Activated CD4-positive, alpha-beta T cell treated with anti-CD3 and anti-CD28 coated beads for 36 hours (primary cell): ENCODE measurements at regions of chr12 and their contacts with region 1.

Region 1: DNA sequence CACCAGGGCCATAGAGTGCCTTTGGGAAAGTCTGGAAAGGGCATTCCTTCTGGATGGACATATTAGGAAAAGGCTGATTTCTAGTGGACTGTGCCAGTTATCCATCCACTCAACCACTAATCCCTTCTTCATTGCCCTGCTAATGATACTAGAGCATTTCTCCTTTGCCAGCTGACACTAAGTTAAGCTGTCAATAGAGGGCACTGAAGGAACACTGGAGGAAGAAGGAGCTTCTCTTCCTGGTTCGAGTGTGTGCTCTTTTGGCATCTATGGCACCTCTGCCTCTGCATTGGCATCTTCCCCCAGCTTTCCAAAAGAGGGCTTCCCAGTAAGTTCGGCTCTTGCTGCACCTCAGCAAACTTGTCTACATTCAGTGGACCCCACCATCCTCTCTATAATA is 165.4 kb downstream of the DERA start:
- DNase-seq: no peak
- ATAC-seq: no peak
- H3K4me3 Mint-ChIP-seq: no peak overlapping the region
- H3K27ac Mint-ChIP-seq: no peak overlapping the region
- H3K4me1 Mint-ChIP-seq: no peaks in the 10 kb centered on the region
- H3K27me3 Mint-ChIP-seq: peaks cover 3% of the 10 kb centered on the region

Region 2: DNA sequence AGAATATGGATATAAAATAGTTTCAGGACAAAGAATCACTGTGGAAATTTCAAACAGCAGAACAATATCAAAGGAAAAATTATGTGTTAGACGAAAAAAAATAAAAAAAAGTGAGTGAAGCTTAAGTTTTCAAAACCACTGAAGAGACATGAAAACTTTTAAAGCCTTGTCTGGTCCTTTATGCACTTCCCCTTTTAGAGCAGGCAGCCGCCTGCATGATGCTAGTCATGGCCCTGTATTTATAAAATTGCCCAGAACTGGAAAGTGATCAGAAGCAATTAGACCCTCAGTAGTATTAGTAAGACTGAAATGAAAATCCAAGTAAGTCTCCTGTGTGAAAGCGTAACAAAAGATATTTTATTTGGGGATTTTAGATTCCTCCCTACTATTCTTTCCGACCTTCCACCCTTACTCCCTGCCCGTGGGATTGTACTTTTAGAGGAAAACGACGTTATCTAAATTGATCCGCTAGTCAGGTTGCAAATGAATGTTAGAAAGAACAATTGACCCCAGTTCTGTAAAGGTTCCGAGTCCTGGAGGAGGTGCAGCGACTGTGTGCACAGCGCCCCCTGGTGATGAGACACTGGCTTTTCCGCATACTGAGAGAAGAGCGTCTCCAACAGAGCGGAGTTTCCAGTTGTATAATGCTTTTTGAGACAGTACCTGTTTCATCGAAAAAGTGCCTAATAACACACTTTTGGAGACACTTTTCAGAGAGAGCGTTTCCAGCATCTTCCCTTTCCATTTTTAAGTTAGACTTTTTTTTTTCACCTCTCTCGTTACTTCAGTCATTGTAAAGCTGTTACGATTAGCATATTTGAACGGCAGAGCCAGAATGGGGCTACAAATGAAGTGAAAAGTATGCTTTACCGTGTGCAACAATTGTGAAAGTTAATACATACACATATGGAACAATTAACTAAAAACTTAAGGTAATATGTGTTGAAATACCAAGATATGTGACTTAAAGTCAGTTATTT is 283.2 kb after region 1 on chr12:
- CTCF ChIA-PET with region 1: no interaction called
- POLR2A ChIA-PET with region 1: no interaction called
- intact Hi-C with region 1: loop called in 1 of 2 experiments (anchors 2 kb)
- DNase-seq: peak; percentile 60
- ATAC-seq: no peak
- H3K4me3 Mint-ChIP-seq: no peak overlapping the region
- H3K27ac Mint-ChIP-seq: no peak overlapping the region
- H3K4me1 Mint-ChIP-seq: no peaks in the 10 kb centered on the region
- H3K27me3 Mint-ChIP-seq: no peaks in the 10 kb centered on the region

Region 3: DNA sequence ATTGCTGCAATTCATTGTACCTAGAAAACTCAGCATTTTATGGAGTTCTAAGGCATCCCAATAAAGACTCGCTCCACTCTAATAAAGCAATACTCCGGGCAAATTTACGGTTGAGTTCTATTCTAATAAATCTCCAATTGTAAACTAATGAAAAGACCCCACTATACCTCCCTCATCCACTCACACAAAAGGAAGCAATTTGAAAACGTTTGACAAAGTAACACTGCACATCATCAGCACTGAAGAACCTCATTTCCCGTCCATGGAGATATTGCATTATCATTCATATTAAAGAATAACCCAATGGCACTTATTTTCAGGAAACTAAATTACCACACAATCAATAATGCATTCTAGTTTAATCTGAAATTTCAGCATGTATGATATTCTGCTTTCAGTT is 640.4 kb after region 1 on chr12:
- CTCF ChIA-PET with region 1: no interaction called
- POLR2A ChIA-PET with region 1: no interaction called
- intact Hi-C with region 1: no loop called
- DNase-seq: no peak
- ATAC-seq: no peak
- H3K4me3 Mint-ChIP-seq: no peak overlapping the region
- H3K27ac Mint-ChIP-seq: no peak overlapping the region
- H3K4me1 Mint-ChIP-seq: no peaks in the 10 kb centered on the region
- H3K27me3 Mint-ChIP-seq: no peaks in the 10 kb centered on the region

Region 4: GRCh38 chr12:17642340-17642650 is 1565.7 kb after region 1 on chr12:
- CTCF ChIA-PET with region 1: no interaction called
- POLR2A ChIA-PET with region 1: no interaction called
- intact Hi-C with region 1: loop called in 1 of 2 experiments (anchors 5 kb)
- DNase-seq: no peak
- ATAC-seq: no peak
- H3K4me3 Mint-ChIP-seq: no peak overlapping the region
- H3K27ac Mint-ChIP-seq: no peak overlapping the region
- H3K4me1 Mint-ChIP-seq: peaks cover 7% of the 10 kb centered on the region
- H3K27me3 Mint-ChIP-seq: no peaks in the 10 kb centered on the region